CD4-positive, alpha-beta T cell (primary cell): ENCODE measurements at regions of chrX and their contacts with region 1.

Region 1: DNA sequence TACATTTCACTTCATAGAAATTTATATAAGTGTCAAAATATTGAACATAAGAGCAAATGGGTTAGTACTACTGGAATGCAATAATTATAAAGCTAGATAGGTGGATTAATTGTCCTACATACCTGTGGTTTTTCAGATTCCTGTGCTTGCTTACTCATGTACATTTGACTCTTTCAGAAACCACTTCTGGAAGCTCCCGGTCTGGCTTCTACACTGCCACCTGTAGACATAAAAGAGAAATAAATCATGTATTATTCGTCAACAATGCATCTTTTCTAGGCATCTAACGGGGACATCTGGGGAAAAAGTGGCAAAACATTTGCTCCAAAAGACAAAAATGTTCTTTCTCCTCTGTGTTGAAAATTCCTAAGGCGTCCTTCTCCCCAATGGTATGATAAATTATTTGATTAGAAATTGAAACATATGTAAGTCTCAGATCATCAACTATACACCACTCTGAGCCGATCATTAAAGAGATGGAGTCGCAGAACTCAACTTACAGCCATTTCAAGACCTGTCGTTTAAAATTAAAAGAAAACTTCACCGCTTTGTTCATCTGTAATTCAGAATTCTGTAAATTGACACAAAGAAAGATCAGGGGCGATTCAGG is 648.7 kb upstream of the DIPK2B start:
- DNase-seq: peak in 6 of 14 experiments; percentile 1 to 67 (median 52)
- ATAC-seq: peak; percentile 54
- H3K4me3 ChIP-seq: peak overlapping the region; percentile 66
- H3K4me3 Mint-ChIP-seq: peak overlapping the region; percentile 96
- H3K27ac ChIP-seq: no peak overlapping the region
- H3K27ac Mint-ChIP-seq: peak overlapping the region; percentile 80
- H3K4me1 ChIP-seq: peaks cover 3% of the 10 kb centered on the region
- H3K4me1 Mint-ChIP-seq: peaks cover 9% of the 10 kb centered on the region
- H3K27me3 ChIP-seq: no peaks in the 10 kb centered on the region
- H3K27me3 Mint-ChIP-seq: no peaks in the 10 kb centered on the region
- CTCF ChIP-seq: peak; percentile 53

Region 2: GRCh38 chrX:45322382-45322781 is 527.0 kb before region 1 on chrX:
- CTCF ChIA-PET with region 1: no interaction called
- POLR2A ChIA-PET with region 1: no interaction called
- intact Hi-C with region 1: loop called in 1 of 2 experiments (anchors 10 kb)
- DNase-seq: peak in 4 of 14 experiments; percentile 3 to 20 (median 15)
- ATAC-seq: no peak
- H3K4me3 ChIP-seq: no peak overlapping the region
- H3K4me3 Mint-ChIP-seq: no peak overlapping the region
- H3K27ac ChIP-seq: no peak overlapping the region
- H3K27ac Mint-ChIP-seq: no peak overlapping the region
- H3K4me1 ChIP-seq: no peaks in the 10 kb centered on the region
- H3K4me1 Mint-ChIP-seq: no peaks in the 10 kb centered on the region
- H3K27me3 ChIP-seq: peaks cover 0 to 6% of the 10 kb centered on the region in 2 experiments
- H3K27me3 Mint-ChIP-seq: no peaks in the 10 kb centered on the region
- CTCF ChIP-seq: no peak

Region 3: DNA sequence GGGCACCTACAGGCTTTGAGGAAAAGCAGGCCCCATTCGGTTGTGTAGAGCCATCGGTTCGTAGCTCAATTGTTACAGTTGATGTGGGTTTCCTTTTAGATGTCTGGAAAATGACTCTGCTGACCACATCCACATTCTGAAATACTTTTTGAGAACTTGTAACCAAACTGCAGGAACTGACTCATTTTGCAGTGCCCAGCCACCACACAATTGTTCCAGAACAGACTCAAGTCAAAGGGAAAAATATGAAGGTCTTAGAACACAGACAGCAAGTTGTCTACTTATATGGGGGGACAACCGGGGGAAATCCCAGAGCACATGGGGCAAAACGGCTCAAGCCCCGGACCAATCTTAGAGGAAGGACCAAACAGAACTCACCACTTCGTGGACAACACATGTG is 91.0 kb before region 1 on chrX:
- CTCF ChIA-PET with region 1: interaction called, 3 read pairs
- POLR2A ChIA-PET with region 1: interaction called, 3 read pairs
- intact Hi-C with region 1: loop called in 1 of 2 experiments (anchors 10 kb)
- DNase-seq: peak in 7 of 14 experiments; percentile 11 to 79 (median 42)
- ATAC-seq: peak; percentile 33
- H3K4me3 ChIP-seq: peak overlapping the region; percentile 24
- H3K4me3 Mint-ChIP-seq: peak overlapping the region; percentile 87
- H3K27ac ChIP-seq: peak overlapping the region; percentile 16 to 57
- H3K27ac Mint-ChIP-seq: peak overlapping the region; percentile 88
- H3K4me1 ChIP-seq: peaks cover 49% of the 10 kb centered on the region
- H3K4me1 Mint-ChIP-seq: peaks cover 75% of the 10 kb centered on the region
- H3K27me3 ChIP-seq: no peaks in the 10 kb centered on the region
- H3K27me3 Mint-ChIP-seq: no peaks in the 10 kb centered on the region
- CTCF ChIP-seq: no peak

Region 4: GRCh38 chrX:45801554-45801953 is 47.8 kb before region 1 on chrX:
- CTCF ChIA-PET with region 1: interaction called, 5 read pairs
- POLR2A ChIA-PET with region 1: interaction called, 47 read pairs
- intact Hi-C with region 1: loop called (anchors 2 to 5 kb)
- DNase-seq: peak in 3 of 14 experiments; percentile 59 to 66 (median 64)
- ATAC-seq: peak; percentile 50
- H3K4me3 ChIP-seq: peak overlapping the region; percentile 38
- H3K4me3 Mint-ChIP-seq: peak overlapping the region; percentile 72
- H3K27ac ChIP-seq: no peak overlapping the region
- H3K27ac Mint-ChIP-seq: peak overlapping the region; percentile 83
- H3K4me1 ChIP-seq: peaks cover 28% of the 10 kb centered on the region
- H3K4me1 Mint-ChIP-seq: peaks cover 57% of the 10 kb centered on the region
- H3K27me3 ChIP-seq: no peaks in the 10 kb centered on the region
- H3K27me3 Mint-ChIP-seq: no peaks in the 10 kb centered on the region
- CTCF ChIP-seq: peak; percentile 44

Region 5: DNA sequence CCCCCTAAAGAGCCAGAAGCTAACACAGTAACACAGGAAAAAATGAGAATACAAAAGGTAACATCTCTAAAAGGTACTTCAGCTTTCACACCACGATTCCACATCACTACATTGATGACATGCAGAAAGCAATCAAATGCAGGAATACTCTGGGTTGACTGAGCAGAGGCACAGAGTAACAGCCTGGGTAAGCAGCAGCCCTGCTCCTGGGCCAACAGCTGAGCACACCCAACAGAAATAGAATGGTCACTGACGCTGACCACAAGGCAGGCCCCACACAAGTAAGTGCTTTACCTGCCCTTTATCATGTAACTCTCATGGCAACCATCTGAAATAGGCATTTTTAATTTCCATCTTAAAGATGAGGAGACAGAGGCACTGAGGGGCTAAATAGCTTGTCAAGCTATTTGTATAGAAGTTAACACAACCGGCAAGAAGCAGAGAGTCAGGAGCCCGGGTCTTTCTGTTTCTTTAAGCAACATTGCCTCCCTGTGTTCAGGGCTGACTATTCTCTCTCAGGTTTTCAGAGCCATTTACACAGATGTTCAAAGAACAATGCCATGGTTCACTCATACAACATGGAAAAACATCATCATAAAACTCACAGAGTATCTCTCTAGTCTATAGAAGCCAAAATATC is 527.0 kb after region 1 on chrX:
- CTCF ChIA-PET with region 1: no interaction called
- POLR2A ChIA-PET with region 1: no interaction called
- intact Hi-C with region 1: loop called in 1 of 2 experiments (anchors 10 kb)
- DNase-seq: peak in 7 of 14 experiments; percentile 3 to 53 (median 25)
- ATAC-seq: peak; percentile 55
- H3K4me3 ChIP-seq: no peak overlapping the region
- H3K4me3 Mint-ChIP-seq: no peak overlapping the region
- H3K27ac ChIP-seq: no peak overlapping the region
- H3K27ac Mint-ChIP-seq: no peak overlapping the region
- H3K4me1 ChIP-seq: no peaks in the 10 kb centered on the region
- H3K4me1 Mint-ChIP-seq: no peaks in the 10 kb centered on the region
- H3K27me3 ChIP-seq: no peaks in the 10 kb centered on the region
- H3K27me3 Mint-ChIP-seq: no peaks in the 10 kb centered on the region
- CTCF ChIP-seq: peak; percentile 25

Region 6: DNA sequence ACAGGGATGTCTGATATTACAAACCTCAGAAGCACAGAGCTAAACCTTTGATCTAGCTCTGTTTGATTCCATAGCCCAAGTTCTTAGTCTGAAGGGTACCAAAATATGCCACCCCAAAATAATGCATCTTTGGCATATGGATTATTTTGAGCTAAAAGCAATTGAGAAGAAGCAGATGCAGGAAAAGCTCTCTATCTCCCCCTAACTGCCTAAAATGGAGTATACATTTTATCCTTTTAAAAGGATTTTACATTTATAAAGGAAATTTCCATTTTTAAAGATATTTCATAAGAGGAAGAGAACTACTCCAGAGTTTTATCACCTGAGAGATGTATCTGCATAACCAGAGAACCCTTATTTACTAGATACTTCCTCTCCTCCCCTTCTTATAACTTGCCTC is 537.2 kb after region 1 on chrX:
- CTCF ChIA-PET with region 1: no interaction called
- POLR2A ChIA-PET with region 1: no interaction called
- intact Hi-C with region 1: no loop called
- DNase-seq: peak in 1 of 14 experiments; percentile 1
- ATAC-seq: no peak
- H3K4me3 ChIP-seq: no peak overlapping the region
- H3K4me3 Mint-ChIP-seq: no peak overlapping the region
- H3K27ac ChIP-seq: no peak overlapping the region
- H3K27ac Mint-ChIP-seq: no peak overlapping the region
- H3K4me1 ChIP-seq: no peaks in the 10 kb centered on the region
- H3K4me1 Mint-ChIP-seq: no peaks in the 10 kb centered on the region
- H3K27me3 ChIP-seq: no peaks in the 10 kb centered on the region
- H3K27me3 Mint-ChIP-seq: no peaks in the 10 kb centered on the region
- CTCF ChIP-seq: peak; percentile 21